ENCODE measurements at regions of chr19 and their contacts with region 1.

Region 1: DNA sequence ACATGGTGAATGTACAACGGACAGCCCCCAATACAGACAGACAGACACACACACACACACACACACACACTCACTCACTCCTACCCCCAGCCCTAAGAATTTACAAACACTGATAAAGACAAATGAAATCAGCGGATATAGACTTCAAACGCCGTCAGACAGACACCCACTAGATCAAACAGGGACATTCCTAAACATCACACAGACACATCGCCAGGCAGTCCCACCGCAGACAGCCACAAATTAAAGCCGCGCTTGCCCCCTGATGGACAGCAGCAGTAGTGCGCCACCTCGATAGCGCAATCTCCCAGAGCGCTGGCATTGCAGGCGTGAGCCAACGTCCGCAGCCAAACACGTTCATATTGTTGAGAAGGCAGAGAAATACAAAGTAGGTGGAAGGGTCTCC is 24.7 kb upstream of the ADGRE1 start:
- DNase-seq: peak; percentile 92
- H3K4me3 Mint-ChIP-seq: peak overlapping the region; percentile 77
- H3K27ac Mint-ChIP-seq: peak overlapping the region; percentile 67
- H3K4me1 Mint-ChIP-seq: peaks cover 16% of the 10 kb centered on the region
- H3K27me3 Mint-ChIP-seq: no peaks in the 10 kb centered on the region

Region 2: DNA sequence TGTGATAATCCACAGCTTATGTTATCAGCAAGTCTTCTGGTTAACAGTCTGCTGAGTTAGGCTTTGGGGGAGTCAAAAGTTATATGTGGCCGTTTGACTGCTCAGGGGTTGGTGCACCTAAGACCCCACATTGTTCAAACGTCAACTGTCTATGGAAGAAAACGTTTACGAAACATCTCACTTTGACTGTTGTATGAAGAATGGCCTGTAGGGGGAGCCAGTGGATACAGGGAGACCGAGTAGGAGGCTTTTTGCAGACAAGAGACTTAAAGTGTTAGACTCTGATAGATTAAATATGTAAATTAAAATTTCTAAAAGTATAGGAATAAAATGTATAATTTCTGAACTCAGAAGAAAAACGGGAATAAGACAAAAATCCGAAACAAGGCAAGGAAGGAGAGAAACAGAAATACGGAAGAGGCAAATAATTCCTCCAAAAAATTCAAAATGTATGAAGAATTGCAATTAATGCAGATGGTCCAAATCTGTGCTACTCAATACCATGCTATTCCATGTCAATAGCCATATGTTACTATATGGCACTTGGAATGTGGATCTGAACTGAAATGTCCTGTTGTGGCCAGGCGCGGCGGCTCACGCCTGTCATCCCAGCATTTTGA is 230.6 kb before region 1 on chr19:
- CTCF ChIA-PET with region 1: interaction called, 10 read pairs
- POLR2A ChIA-PET with region 1: interaction called, 3 read pairs
- DNase-seq: peak; percentile 81
- H3K4me3 Mint-ChIP-seq: no peak overlapping the region
- H3K27ac Mint-ChIP-seq: no peak overlapping the region
- H3K4me1 Mint-ChIP-seq: peaks cover 31% of the 10 kb centered on the region
- H3K27me3 Mint-ChIP-seq: peaks cover 7% of the 10 kb centered on the region

Region 3: GRCh38 chr19:6767357-6768235 is 95.1 kb before region 1 on chr19 and contains the start of gene SH2D3A:
- CTCF ChIA-PET with region 1: interaction called, 31 read pairs
- POLR2A ChIA-PET with region 1: interaction called, 12 read pairs
- DNase-seq: peak; percentile 96
- H3K4me3 Mint-ChIP-seq: peak within 1 kb of the TSS; percentile 88
- H3K27ac Mint-ChIP-seq: peak within 1 kb of the TSS; percentile 89
- H3K4me1 Mint-ChIP-seq: peaks cover 53% of the 10 kb centered on the region
- H3K27me3 Mint-ChIP-seq: no peaks in the 10 kb centered on the region
- total RNA-seq, gene SH2D3A: 26.4 to 28.1 TPM

Region 4: DNA sequence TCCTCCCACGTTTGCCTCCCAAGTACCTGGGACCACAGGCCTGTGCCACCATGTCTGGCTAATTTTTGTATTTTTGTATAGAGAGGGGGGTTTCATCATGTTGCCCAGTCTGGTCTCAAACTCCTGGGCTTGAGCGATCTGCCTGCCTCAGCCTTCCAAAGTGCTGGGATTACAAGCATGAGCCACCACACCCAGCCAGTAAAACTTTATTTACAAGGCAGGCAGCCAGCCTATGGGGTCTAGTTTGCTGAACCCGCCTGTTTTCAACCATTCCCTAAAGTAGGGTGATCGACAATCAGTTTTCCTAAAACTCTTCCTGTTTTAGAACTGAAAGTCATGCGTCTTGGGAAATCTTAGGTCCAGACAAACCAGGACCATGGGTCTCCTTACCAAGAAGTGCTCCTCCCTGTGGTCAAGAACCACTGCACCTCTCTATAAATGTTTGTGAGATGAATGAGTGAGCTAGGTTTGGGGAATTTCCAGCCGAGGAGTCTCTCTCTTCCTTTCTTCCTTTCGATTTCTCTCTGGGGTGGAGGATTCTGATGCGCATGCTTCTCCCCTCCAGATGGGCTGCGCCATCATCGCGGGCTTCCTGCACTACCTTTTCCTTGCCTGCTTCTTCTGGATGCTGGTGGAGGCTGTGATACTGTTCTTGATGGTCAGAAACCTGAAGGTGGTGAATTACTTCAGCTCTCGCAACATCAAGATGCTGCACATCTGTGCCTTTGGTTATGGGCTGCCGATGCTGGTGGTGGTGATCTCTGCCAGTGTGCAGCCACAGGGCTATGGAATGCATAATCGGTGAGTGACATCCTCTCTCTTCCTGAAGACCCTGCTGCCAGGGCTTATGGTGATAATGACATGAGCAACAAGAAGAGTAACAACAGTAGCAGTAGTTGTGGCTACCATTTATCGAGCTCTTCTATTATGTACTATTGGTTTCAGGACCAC is 63.4 kb after region 1 on chr19:
- CTCF ChIA-PET with region 1: no interaction called
- POLR2A ChIA-PET with region 1: no interaction called
- DNase-seq: no peak
- H3K4me3 Mint-ChIP-seq: peak overlapping the region; percentile 53
- H3K27ac Mint-ChIP-seq: no peak overlapping the region
- H3K4me1 Mint-ChIP-seq: peaks cover 12% of the 10 kb centered on the region
- H3K27me3 Mint-ChIP-seq: no peaks in the 10 kb centered on the region

Measured in activated CD4-positive, alpha-beta memory T cell treated with anti-CD3 and anti-CD28 coated beads, Interleukin-2, amount 10 ng/mL, durations not matched to agents 7 days and 5 days (primary cell).